H1 (cell line): ENCODE measurements at regions of chr16 and their contacts with region 1.

Region 1: DNA sequence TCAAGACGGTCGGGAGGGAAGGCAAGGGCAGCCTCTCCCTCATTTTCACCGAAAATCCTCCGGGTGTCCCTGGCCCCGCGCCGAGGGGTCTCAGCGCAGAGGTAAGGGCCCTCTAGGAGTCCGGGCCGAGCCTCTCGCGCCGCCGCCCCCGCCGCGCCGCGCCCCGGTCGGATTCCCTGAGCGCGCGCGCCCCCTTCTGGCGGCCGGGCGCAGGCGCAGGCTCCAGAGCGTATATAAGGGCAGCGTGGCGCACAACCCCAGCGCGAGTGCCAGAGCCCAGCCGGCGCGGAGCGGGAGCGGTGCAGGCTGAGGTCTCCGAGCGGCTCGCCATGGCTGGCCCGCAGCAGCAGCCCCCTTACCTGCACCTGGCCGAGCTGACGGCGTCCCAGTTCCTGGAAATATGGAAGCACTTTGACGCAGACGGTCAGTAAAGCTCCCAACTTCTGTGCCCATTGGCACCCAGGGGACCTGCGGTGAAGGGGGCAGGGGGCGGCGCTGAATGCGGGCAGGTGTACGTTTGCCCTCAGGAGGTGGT is at the start of gene CALB2:
- DNase-seq: peak; percentile 27 to 91
- H3K4me3 ChIP-seq: peak within 1 kb of the TSS; percentile 30 to 65 (median 51); a peak in 7 of 8 replicates
- H3K27ac ChIP-seq: no peak within 1 kb of the TSS
- H3K4me1 ChIP-seq: peaks cover 0 to 12% (median 6%) of the 10 kb centered on the region in 4 experiments; a peak in 5 of 7 replicates
- H3K27me3 ChIP-seq: peaks cover 0 to 22% (median 18%) of the 10 kb centered on the region in 4 experiments; a peak in 6 of 7 replicates
- CTCF ChIP-seq: peak; percentile 77 to 97 (median 85)
- EP300 ChIP-seq: 0 out of 3 replicates have a peak, but pooled peaks of 1 of the 2 experiments have one; percentile 21
- POLR2A ChIP-seq: peak in 1 of 2 experiments; percentile 64; a peak in 1 of 3 replicates
- RAD21 ChIP-seq: peak; percentile 73 to 98
- total RNA-seq, gene CALB2: 1.9 and 2.7 TPM in 2 replicates

Region 2: GRCh38 chr16:71328151-71328550 is 30.4 kb before region 1 on chr16:
- CTCF ChIA-PET with region 1: interaction called, 12 read pairs
- POLR2A ChIA-PET with region 1: no interaction called
- DNase-seq: no peak
- H3K4me3 ChIP-seq: no peak overlapping the region
- H3K27ac ChIP-seq: no peak overlapping the region
- H3K4me1 ChIP-seq: peaks cover 0 to 5% (median under 1%) of the 10 kb centered on the region in 4 experiments; a peak in 2 of 7 replicates
- H3K27me3 ChIP-seq: no peaks in the 10 kb centered on the region
- CTCF ChIP-seq: no peak
- EP300 ChIP-seq: no peak
- POLR2A ChIP-seq: no peak
- RAD21 ChIP-seq: no peak

Region 3: DNA sequence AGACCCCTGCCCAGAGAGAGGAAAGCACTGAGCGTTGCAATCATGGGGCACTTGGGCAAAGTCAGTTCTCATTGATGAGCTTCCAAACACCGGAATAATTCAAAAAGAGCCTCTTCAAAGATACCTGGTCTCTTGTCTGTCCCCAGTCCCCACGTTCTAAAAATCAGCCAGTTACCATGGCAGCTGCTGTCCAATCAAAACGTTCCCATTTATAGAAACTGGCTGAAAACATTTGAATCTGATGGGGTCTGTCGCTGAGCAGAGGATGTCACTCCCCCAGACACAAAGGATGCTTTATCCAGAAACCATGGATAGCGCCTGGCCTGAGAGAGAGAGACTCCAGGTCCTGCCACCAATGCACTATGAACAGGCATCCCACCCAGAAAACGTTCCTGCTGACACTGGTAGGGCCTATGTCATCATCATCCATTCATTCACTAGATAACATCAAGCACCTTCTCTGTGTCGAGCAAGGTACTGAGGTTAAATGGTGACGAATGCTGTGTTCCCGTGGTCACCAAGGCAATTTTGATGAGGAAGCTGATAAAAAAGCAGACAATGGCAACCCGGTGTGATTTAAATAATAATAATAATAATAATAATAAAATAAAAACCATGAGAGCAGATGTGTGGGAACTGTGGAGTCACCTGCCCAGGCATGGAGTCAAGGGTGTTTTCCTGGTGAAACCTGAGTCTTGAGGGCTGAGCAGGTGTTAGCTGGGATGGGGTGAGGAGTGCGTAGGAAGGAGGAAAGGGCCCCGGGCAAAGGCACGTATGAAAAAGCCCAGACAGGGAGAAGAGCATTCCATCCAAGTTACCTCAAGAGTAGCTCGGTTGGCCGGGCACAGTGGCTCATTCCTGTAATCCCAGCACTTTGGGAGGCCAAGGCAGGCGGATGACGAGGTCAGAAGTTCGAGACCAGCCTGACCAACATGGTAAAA is 19.0 kb before region 1 on chr16:
- CTCF ChIA-PET with region 1: interaction called, 37 read pairs
- POLR2A ChIA-PET with region 1: interaction called, 3 read pairs
- DNase-seq: no peak
- H3K4me3 ChIP-seq: no peak overlapping the region
- H3K27ac ChIP-seq: no peak overlapping the region
- H3K4me1 ChIP-seq: peaks cover 0 to 2% (median 0%) of the 10 kb centered on the region in 4 experiments; a peak in 2 of 7 replicates
- H3K27me3 ChIP-seq: no peaks in the 10 kb centered on the region
- CTCF ChIP-seq: no peak
- EP300 ChIP-seq: no peak
- POLR2A ChIP-seq: no peak
- RAD21 ChIP-seq: no peak